ENCODE measurements at regions of chr11 and their contacts with region 1.

Region 1: DNA sequence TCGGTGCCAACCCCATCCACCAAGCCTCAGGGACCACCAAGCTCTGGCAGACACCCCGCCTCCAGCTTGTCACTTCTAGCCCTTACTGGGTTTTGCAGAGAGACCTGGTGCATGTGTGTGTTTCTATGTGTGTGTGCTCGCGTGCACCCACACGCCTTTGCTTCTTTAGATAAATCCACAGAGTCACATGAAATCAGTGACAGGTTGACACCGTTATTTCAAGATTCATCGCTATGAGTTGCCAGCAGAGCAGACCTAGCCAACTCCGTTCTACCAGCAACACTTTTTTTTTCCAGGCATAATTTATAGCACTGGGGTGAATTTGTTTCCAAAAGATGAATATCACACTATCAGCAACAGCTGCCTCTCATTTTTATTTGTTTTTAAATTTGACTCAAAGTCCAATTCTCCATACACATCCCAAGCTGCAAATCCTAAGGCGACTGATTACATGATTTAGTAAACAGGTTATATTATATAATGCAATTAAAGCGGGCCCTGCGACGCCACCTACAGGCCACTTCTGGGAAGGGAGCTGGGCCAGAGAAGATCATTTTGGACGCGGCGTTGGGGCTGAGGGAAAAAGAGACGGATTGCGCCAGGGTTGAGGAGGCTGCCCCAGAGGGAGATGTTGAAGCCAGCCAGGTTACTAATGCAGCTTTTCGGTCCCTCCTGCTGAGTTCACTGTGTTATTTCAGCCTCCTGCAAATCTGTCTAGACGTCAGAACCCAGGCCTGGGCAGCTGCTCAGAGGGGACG is 150.5 kb downstream of the FEZ1 start:
- DNase-seq: peak; percentile 50
- H3K4me3 ChIP-seq: no peak overlapping the region
- H3K27ac ChIP-seq: no peak overlapping the region
- H3K27me3 ChIP-seq: no peaks in the 10 kb centered on the region
- CTCF ChIP-seq: peak; percentile 95

Region 2: DNA sequence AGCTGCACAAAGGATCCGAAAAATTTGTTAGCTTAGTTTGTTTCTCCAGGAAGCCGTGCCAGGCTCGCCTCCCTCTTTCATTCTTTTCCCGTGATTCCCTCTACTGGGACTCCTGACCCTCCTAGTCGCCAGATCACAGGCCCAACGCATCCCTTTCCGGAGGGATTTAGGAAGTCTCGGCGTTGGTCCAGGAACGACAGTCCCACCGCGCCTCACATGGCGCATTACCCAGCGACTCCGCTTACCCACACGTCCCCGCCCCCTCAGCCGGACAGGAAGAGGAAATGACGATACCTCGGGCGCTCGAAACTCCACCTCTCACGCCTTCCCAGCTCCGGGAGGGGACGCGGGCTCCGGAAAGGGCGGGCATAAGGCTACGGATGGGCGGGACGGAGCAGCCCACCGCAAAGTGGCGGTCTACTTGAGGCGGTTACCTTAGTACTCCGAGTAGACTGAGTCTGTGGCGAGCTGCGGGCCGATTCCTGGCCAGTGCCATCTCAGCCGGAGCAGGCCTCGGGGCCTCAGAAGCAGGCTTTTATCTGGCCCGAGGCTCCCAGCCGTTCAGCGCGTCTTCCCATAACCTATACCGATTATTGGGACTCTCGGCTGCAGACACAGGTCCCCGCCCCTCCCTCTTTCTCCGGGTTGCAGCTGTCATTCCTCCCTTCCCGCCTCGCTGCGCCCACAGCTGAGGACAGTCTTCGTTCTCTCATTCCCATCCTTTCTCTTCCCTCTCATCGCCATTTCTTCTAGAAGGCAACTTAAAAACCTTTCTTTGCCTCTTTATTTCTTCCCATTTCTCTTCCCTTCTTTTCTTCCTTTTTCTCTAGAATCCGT is 391.6 kb before region 1 on chr11 and contains the start of gene CCDC15:
- CTCF ChIA-PET with region 1: interaction called, 16 read pairs
- POLR2A ChIA-PET with region 1: no interaction called
- DNase-seq: peak; percentile 92
- H3K4me3 ChIP-seq: peak within 1 kb of the TSS; percentile 61
- H3K27ac ChIP-seq: peak within 1 kb of the TSS; percentile 87
- H3K27me3 ChIP-seq: no peaks in the 10 kb centered on the region
- CTCF ChIP-seq: no peak
- polyA plus RNA-seq, gene CCDC15: 0.73 and 1.1 TPM in 2 replicates

Region 3: DNA sequence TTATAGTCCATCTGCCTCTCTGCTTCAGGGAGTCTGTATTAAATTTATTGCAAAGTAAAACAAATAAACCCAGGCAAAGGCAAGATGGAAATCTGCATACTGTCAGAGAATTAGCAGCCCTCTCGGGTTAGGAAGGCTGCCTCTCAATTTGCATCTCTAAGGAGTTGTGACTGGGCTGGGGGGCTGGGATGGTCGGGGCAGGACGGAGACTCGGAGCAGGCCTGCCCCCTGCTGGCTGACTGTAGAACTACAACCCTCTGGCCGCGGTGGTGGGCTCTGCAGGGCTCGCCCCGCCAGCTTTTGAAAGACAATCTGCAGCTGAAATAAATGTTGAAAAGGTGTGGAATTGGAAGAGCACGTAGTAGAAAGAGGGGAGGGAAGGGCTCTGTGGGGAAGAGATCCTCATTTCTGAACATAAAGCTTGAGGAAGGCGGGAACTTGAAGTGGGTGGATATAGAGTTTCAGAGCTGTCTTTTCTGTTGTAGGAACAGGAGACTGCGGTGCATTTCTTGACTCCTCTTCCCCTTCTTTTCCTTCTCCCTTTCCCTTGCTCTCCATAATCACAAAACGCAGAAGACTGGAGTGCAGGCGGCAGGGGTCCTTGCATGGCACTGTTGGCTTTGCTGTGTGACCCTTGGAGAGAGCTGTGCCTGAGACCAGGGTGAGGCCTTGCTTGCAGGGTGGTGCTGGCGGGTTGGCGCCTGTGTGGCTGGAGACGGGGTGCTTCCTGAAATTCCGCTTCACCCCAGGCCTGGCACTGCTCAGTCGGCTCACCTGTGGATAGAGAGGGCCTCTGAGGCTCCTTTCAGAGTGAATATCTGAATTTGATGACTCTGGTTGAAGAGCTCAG is 203.7 kb before region 1 on chr11:
- CTCF ChIA-PET with region 1: interaction called, 81 read pairs
- POLR2A ChIA-PET with region 1: no interaction called
- DNase-seq: no peak
- H3K4me3 ChIP-seq: no peak overlapping the region
- H3K27ac ChIP-seq: no peak overlapping the region
- H3K27me3 ChIP-seq: peaks cover 10% of the 10 kb centered on the region
- CTCF ChIP-seq: peak; percentile 97

Region 4: DNA sequence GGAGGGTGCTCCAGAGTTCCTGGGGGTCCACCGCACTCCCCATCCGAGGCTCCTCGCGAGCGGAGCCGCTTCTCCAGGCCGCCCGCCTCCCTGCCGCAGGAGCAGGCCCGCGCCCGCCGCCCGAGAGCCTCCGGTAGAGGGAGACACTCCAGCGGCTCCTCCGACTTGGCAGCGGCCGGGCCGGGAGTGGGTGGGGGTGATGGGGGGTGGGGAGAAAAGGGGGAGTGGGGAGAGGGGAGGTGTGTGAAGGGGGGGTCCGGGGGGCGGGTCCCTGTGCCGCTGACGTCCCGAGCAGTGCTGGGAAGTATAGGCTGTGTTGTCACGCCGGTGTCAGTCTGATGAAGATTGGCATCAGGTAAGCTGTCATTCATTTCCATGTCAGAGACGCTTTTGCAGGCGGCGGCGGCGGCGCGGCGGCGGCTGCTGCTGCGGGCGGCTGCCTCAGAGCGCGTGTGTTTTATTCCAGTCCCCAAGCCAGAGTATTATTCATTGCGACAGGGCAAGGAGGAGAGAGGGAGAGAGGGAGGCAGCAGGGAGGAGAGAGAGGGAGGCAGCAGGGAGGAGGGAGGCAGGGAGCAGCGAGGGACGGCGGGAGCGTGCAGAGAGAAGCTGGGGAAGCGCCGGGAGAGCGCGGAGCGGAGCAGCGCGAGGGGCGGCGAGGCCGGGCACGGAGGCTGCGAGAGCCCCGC is 181.0 kb before region 1 on chr11 and contains the start of gene PKNOX2:
- CTCF ChIA-PET with region 1: interaction called, 164 read pairs
- POLR2A ChIA-PET with region 1: no interaction called
- DNase-seq: no peak
- H3K4me3 ChIP-seq: peak within 1 kb of the TSS; percentile 72
- H3K27ac ChIP-seq: peak within 1 kb of the TSS; percentile 65
- H3K27me3 ChIP-seq: peaks cover 11% of the 10 kb centered on the region
- CTCF ChIP-seq: peak; percentile 66
- polyA plus RNA-seq, gene PKNOX2: 3.0 and 3.6 TPM in 2 replicates

Region 5: DNA sequence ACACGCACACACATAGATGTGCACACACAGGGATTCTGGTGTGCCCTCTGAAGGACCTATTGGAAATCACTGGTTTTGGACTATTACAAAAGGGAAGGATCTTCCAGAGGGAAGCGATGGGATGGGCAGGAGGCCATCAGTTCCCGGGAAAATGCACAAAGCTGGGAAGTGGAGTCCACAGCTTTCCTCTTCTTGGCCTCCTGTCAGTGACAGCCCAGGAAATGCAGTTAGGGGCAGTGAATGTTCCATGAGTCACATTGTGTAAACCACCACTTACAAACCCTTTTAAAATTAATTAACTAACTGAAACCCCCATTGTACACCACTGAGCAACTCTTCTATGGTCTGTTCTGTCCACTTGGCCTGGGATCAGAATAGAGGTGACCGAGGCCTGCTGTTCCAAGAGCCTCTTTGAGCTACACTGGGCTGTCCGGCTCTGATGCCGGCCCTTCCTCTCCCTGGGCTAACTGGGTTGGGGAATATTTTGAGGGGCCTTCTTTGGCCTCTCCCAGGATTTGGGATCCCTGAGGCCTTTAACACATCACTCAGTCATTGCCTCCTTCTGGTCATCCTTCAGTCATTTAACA is 12.7 kb after region 1 on chr11:
- CTCF ChIA-PET with region 1: interaction called, 68 read pairs
- POLR2A ChIA-PET with region 1: no interaction called
- DNase-seq: no peak
- H3K4me3 ChIP-seq: no peak overlapping the region
- H3K27ac ChIP-seq: peak overlapping the region; percentile 21
- H3K27me3 ChIP-seq: no peaks in the 10 kb centered on the region
- CTCF ChIP-seq: no peak

Region 6: GRCh38 chr11:125390946-125391345 is 45.3 kb after region 1 on chr11:
- CTCF ChIA-PET with region 1: interaction called, 16 read pairs
- POLR2A ChIA-PET with region 1: no interaction called
- DNase-seq: peak; percentile 43
- H3K4me3 ChIP-seq: no peak overlapping the region
- H3K27ac ChIP-seq: no peak overlapping the region
- H3K27me3 ChIP-seq: no peaks in the 10 kb centered on the region
- CTCF ChIP-seq: no peak

Region 7: DNA sequence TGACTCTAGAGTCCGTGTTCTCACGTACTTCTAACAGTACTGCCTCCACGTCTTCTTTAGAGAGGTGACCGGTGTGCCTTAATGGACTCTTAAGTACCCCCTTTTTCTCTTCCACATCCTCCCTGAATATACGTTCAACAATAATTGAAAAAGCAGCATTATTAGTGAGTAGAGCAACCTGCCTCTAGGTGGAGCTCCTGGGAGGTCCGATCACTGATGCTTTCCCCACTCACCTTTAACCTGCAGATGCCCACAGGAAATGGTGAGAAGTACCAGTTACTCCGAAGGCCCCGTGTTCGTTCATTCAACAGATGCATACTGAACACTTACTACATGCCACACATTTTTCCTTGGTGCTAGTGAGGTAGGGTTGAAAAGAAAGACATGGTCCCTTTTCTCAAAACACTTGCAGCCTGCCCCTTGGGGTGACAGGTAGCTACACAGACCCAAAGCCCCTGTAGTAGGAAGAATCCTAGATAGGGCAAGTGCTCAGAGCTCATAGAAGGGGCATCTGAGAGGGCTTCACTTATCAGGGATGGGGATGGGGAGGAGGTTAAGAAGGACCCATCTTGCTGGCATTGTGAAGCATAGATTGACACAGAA is 77.7 kb after region 1 on chr11:
- CTCF ChIA-PET with region 1: no interaction called
- POLR2A ChIA-PET with region 1: no interaction called
- DNase-seq: no peak
- H3K4me3 ChIP-seq: no peak overlapping the region
- H3K27ac ChIP-seq: no peak overlapping the region
- H3K27me3 ChIP-seq: peaks cover 18% of the 10 kb centered on the region
- CTCF ChIP-seq: peak; percentile 45

Region 8: GRCh38 chr11:125468852-125469251 is 123.3 kb after region 1 on chr11:
- CTCF ChIA-PET with region 1: no interaction called
- POLR2A ChIA-PET with region 1: no interaction called
- DNase-seq: no peak
- H3K4me3 ChIP-seq: no peak overlapping the region
- H3K27ac ChIP-seq: no peak overlapping the region
- H3K27me3 ChIP-seq: no peaks in the 10 kb centered on the region
- CTCF ChIP-seq: no peak

Measured in AG04450 (cell line).